CD8-positive, alpha-beta T cell (primary cell): ENCODE measurements at regions of chr13 and their contacts with region 1.

Region 1: GRCh38 chr13:68145852-68146251 is 915.7 kb upstream of the PCDH9 start:
- DNase-seq: no peak
- ATAC-seq: no peak
- H3K4me3 ChIP-seq: no peak overlapping the region
- H3K4me3 Mint-ChIP-seq: no peak overlapping the region
- H3K27ac ChIP-seq: no peak overlapping the region
- H3K27ac Mint-ChIP-seq: no peak overlapping the region
- H3K4me1 ChIP-seq: no peaks in the 10 kb centered on the region
- H3K4me1 Mint-ChIP-seq: no peaks in the 10 kb centered on the region
- H3K27me3 ChIP-seq: no peaks in the 10 kb centered on the region
- H3K27me3 Mint-ChIP-seq: no peaks in the 10 kb centered on the region
- CTCF ChIP-seq: no peak

Region 2: GRCh38 chr13:68125087-68125480 is 20.8 kb before region 1 on chr13:
- CTCF ChIA-PET with region 1: no interaction called
- POLR2A ChIA-PET with region 1: no interaction called
- intact Hi-C with region 1: no loop called
- DNase-seq: no peak
- ATAC-seq: no peak
- H3K4me3 ChIP-seq: no peak overlapping the region
- H3K4me3 Mint-ChIP-seq: no peak overlapping the region
- H3K27ac ChIP-seq: no peak overlapping the region
- H3K27ac Mint-ChIP-seq: no peak overlapping the region
- H3K4me1 ChIP-seq: no peaks in the 10 kb centered on the region
- H3K4me1 Mint-ChIP-seq: no peaks in the 10 kb centered on the region
- H3K27me3 ChIP-seq: no peaks in the 10 kb centered on the region
- H3K27me3 Mint-ChIP-seq: no peaks in the 10 kb centered on the region
- CTCF ChIP-seq: no peak

Region 3: DNA sequence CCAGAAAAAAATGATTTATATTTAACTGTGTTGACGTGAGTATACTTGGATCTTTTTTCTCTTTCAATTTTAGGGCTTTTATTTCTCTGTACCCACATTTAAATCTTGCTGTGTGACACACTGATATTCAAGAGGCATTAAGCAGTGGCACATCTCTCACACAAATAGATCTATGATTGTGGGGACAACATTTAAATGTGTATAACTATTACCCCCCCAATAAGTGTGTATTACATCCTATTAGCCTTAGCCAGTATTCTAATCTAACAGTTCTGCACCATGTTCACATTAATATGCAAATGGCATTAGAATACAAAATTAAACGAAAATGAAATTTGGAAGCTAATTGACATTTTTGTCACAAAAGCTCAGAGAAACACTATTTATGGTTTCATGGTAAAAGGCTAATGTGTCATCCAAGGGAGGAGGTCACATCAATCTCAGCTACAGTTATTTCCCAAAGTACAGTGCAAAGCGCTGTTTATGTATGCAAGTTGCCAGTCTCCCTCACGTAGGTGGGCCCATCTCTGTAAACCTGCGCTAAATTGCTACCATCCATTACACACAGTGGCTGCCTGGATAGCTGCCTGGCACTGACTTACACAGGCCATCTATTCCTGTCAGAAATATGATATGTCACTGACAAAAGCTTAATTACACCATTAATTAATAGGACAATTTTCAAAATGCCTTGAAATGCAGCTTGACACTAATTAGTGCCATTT is 69.0 kb after region 1 on chr13:
- CTCF ChIA-PET with region 1: no interaction called
- POLR2A ChIA-PET with region 1: no interaction called
- intact Hi-C with region 1: loop called in 1 of 2 experiments (anchors 2 kb)
- DNase-seq: no peak
- ATAC-seq: no peak
- H3K4me3 ChIP-seq: no peak overlapping the region
- H3K4me3 Mint-ChIP-seq: no peak overlapping the region
- H3K27ac ChIP-seq: no peak overlapping the region
- H3K27ac Mint-ChIP-seq: no peak overlapping the region
- H3K4me1 ChIP-seq: no peaks in the 10 kb centered on the region
- H3K4me1 Mint-ChIP-seq: no peaks in the 10 kb centered on the region
- H3K27me3 ChIP-seq: no peaks in the 10 kb centered on the region
- H3K27me3 Mint-ChIP-seq: no peaks in the 10 kb centered on the region
- CTCF ChIP-seq: no peak